IMR-90 (cell line): ENCODE measurements at regions of chr21 and their contacts with region 1.

Region 1: GRCh38 chr21:34801519-34802132 is 132.8 kb downstream of the CLIC6 start:
- DNase-seq: no peak
- ATAC-seq: no peak; the same call in 1 of the 2 replicates
- H3K4me3 ChIP-seq: no peak overlapping the region
- H3K27ac ChIP-seq: no peak overlapping the region
- H3K4me1 ChIP-seq: peaks cover 7% of the 10 kb centered on the region
- H3K27me3 ChIP-seq: no peaks in the 10 kb centered on the region
- CTCF ChIP-seq: peak; percentile 28; the same call in 1 of the 2 replicates
- POLR2A ChIP-seq: no peak
- RAD21 ChIP-seq: 0 out of 2 replicates have a peak, but pooled peaks have one; percentile 13

Region 2: GRCh38 chr21:34702341-34703170 is 99.1 kb before region 1 on chr21:
- CTCF ChIA-PET with region 1: no interaction called
- POLR2A ChIA-PET with region 1: no interaction called
- dilution Hi-C with region 1: no loop called
- in situ Hi-C with region 1: no loop called
- intact Hi-C with region 1: loop called (anchors 5 kb)
- DNase-seq: peak; percentile 98
- ATAC-seq: peak; percentile 97
- H3K4me3 ChIP-seq: no peak overlapping the region
- H3K27ac ChIP-seq: peak overlapping the region; percentile 59
- H3K4me1 ChIP-seq: peaks cover 15% of the 10 kb centered on the region
- H3K27me3 ChIP-seq: peaks cover 1% of the 10 kb centered on the region; the same call in 1 of the 2 replicates
- CTCF ChIP-seq: no peak
- POLR2A ChIP-seq: peak; percentile 38; the same call in 1 of the 2 replicates
- RAD21 ChIP-seq: 0 out of 2 replicates have a peak, but pooled peaks have one; percentile 4

Region 3: GRCh38 chr21:34996304-34997101 is 194.9 kb after region 1 on chr21:
- CTCF ChIA-PET with region 1: no interaction called
- POLR2A ChIA-PET with region 1: no interaction called
- dilution Hi-C with region 1: no loop called
- in situ Hi-C with region 1: no loop called
- intact Hi-C with region 1: no loop called
- DNase-seq: peak; percentile 41
- ATAC-seq: peak; percentile 61
- H3K4me3 ChIP-seq: no peak overlapping the region
- H3K27ac ChIP-seq: peak overlapping the region; percentile 52
- H3K4me1 ChIP-seq: peaks cover 18% of the 10 kb centered on the region
- H3K27me3 ChIP-seq: no peaks in the 10 kb centered on the region
- CTCF ChIP-seq: no peak
- POLR2A ChIP-seq: no peak
- RAD21 ChIP-seq: no peak